ENCODE measurements at regions of chr17 and their contacts with region 1.

Region 1: DNA sequence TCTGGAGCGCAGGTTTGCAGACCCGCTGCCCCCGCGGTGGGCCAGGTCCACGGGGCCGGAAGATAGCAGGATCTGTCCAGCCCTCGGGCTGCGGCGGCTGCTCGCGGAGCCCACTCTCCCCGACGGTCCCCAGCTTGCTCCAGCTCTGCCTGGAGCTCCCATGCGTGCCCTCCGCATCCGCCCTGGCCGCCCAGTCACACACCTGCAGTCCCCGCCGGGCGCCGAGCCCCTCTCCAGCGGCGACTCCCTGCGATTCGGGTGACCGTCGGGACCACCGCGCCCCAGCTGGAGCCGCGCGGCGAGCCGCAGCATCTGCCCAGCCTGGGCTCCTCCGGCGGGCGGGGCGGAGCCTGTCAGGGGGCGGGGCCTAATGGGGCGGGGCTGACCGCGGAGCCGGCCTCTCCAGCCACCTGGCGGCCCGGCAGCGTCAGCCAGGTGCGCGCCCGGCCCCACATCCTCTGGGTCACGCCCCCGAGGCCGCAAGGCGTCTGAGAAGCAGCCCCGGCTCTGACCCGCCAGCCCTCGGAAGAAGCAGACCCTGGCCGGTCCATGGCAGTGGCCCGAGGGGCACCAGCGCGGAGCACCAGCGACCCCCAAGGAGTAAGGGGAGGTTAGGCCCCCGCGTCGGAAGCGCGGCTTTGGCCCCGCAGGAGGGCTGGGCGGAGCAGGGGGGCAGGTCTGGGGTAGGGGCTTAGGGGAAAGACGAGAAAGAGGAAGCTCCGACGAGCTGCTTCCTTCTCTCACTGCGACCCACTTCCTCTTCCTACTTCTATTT is at the start of gene PIK3R5:
- DNase-seq: peak; percentile 73 to 83 (median 78)
- H3K4me3 ChIP-seq: peak within 1 kb of the TSS; percentile 74 to 99
- H3K4me3 Mint-ChIP-seq: peak within 1 kb of the TSS; percentile 97 to 100 (median 98)
- H3K27ac ChIP-seq: peak within 1 kb of the TSS; percentile 79
- H3K27ac Mint-ChIP-seq: peak within 1 kb of the TSS; percentile 92 to 100 (median 96)
- H3K4me1 ChIP-seq: peaks cover 45% of the 10 kb centered on the region
- H3K4me1 Mint-ChIP-seq: peaks cover 35 to 46% (median 39%) of the 10 kb centered on the region in 4 donors
- H3K27me3 ChIP-seq: no peaks in the 10 kb centered on the region
- H3K27me3 Mint-ChIP-seq: no peaks in the 10 kb centered on the region
- total RNA-seq, gene PIK3R5: 85.1 to 89.4 TPM

Region 2: GRCh38 chr17:8894673-8895578 is 70.7 kb before region 1 on chr17:
- CTCF ChIA-PET with region 1: interaction called, 14 read pairs
- POLR2A ChIA-PET with region 1: interaction called, 89 read pairs
- intact Hi-C with region 1: loop called (anchors 1 kb)
- DNase-seq: peak in 4 of 5 donors; percentile 45 to 46 (median 46)
- H3K4me3 ChIP-seq: no peak overlapping the region
- H3K4me3 Mint-ChIP-seq: peak overlapping the region in 7 of 8 donors; percentile 12 to 44 (median 33)
- H3K27ac ChIP-seq: no peak overlapping the region
- H3K27ac Mint-ChIP-seq: peak overlapping the region; percentile 56 to 98 (median 92)
- H3K4me1 ChIP-seq: peaks cover 61% of the 10 kb centered on the region
- H3K4me1 Mint-ChIP-seq: peaks cover 51 to 68% (median 58%) of the 10 kb centered on the region in 4 donors
- H3K27me3 ChIP-seq: no peaks in the 10 kb centered on the region
- H3K27me3 Mint-ChIP-seq: no peaks in the 10 kb centered on the region

Region 3: DNA sequence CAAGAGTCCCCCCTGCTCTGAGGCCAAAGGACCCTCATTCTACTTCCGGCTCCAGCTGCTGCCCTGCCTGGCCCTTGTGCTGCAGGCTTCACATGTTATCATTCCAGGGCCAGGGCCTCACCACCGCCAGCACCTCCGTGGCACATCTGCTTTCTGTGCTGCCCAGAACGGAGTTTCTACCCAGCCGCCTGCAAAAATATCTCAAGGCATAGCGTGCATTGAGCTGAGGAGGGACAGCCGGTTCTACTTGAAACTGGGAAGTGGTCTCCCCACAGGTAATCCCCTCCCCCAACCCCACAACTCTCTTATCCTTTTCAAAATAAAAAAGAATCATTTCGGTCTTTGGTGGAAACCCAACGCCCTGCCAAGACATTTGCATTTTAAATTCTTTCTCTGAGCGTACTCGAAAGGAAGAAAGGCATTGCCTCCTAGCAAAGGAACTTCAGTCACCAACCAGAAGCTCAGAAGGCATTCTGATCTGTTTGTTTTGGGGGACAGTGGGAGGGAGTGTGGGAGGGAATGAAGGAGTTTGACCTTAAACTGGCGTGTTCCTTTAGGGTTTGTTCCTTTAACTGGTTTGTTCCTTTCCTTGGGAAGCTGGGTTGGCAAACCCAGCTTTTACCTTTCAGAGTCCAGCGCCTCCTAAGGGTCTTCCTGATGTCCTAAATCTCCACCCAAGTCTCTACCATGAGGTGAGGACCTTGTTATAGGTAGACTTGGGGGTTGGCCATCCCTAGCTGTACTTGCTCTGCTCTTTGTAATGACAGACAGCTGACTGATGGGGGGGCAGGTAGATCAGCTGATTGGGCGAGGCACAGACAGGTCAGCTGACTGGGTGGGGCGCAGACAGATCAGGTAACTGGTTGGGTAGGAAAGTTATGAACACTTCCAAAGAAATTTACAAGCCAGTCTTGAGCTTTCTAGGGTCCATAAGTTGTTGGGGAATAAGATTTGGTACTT is 64.7 kb before region 1 on chr17:
- CTCF ChIA-PET with region 1: interaction called, 14 read pairs
- POLR2A ChIA-PET with region 1: interaction called, 89 read pairs
- intact Hi-C with region 1: loop called (anchors 1 kb)
- DNase-seq: no peak
- H3K4me3 ChIP-seq: no peak overlapping the region
- H3K4me3 Mint-ChIP-seq: peak overlapping the region in 6 of 8 donors; percentile 18 to 86 (median 52)
- H3K27ac ChIP-seq: peak overlapping the region; percentile 82
- H3K27ac Mint-ChIP-seq: peak overlapping the region; percentile 96 to 100 (median 98)
- H3K4me1 ChIP-seq: peaks cover 59% of the 10 kb centered on the region
- H3K4me1 Mint-ChIP-seq: peaks cover 52 to 75% (median 65%) of the 10 kb centered on the region in 4 donors
- H3K27me3 ChIP-seq: no peaks in the 10 kb centered on the region
- H3K27me3 Mint-ChIP-seq: no peaks in the 10 kb centered on the region

Region 4: GRCh38 chr17:8954339-8954738 is 11.2 kb before region 1 on chr17:
- CTCF ChIA-PET with region 1: interaction called, 28 read pairs
- POLR2A ChIA-PET with region 1: interaction called, 509 read pairs
- intact Hi-C with region 1: loop called (anchors 1 kb)
- DNase-seq: peak; percentile 80 to 96 (median 81)
- H3K4me3 ChIP-seq: peak overlapping the region in 1 of 2 donors; percentile 27
- H3K4me3 Mint-ChIP-seq: peak overlapping the region; percentile 76 to 91 (median 88)
- H3K27ac ChIP-seq: peak overlapping the region; percentile 65
- H3K27ac Mint-ChIP-seq: peak overlapping the region; percentile 92 to 100 (median 98)
- H3K4me1 ChIP-seq: peaks cover 95% of the 10 kb centered on the region
- H3K4me1 Mint-ChIP-seq: peaks cover 77 to 98% (median 92%) of the 10 kb centered on the region in 4 donors
- H3K27me3 ChIP-seq: no peaks in the 10 kb centered on the region
- H3K27me3 Mint-ChIP-seq: no peaks in the 10 kb centered on the region